ENCODE measurements at regions of chr22 and their contacts with region 1.

Region 1: DNA sequence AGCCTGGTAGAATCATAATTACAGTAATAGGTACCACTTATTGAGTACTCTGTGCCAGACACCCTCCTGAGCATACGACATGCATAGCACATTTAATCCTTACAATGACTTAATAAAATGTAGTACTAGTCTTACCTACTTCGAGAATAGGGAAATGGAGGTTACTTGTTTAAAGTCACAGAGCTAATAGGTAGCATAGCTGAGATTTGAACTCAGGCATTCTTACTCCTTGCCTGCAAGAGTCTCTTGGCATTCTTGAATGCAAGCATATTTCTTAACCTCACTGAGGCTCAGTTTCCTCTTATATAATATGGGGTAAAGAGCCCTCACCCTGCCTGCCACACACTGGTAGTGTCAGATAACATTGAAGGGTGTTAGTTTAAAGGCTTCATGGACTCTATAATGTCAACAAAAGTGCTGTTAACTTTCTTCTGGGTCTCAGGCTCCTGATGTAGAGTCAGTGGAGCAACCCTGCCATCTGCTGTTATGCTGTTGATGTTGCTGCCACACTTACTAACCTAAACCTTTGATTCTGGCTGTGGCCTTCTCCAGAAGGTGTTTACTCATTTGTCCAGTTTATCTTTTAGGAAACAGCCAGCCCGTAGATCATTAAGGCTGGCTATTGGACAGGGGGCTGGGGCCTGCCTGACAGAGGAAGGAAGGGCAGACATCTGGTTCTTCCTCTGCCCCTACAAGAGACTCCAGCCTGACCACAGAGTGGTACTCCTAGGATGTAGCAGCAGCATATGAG is 18.9 kb downstream of the LIMK2 start:
- DNase-seq: peak; percentile 74
- ATAC-seq: peak; percentile 96
- H3K4me3 ChIP-seq: no peak overlapping the region
- H3K27ac ChIP-seq: no peak overlapping the region
- H3K4me1 ChIP-seq: peaks cover 15% of the 10 kb centered on the region
- H3K27me3 ChIP-seq: no peaks in the 10 kb centered on the region
- CTCF ChIP-seq: peak; percentile 91
- POLR2A ChIP-seq: peak; percentile 40; the same call in 1 of the 2 replicates
- RAD21 ChIP-seq: peak; percentile 93

Region 2: DNA sequence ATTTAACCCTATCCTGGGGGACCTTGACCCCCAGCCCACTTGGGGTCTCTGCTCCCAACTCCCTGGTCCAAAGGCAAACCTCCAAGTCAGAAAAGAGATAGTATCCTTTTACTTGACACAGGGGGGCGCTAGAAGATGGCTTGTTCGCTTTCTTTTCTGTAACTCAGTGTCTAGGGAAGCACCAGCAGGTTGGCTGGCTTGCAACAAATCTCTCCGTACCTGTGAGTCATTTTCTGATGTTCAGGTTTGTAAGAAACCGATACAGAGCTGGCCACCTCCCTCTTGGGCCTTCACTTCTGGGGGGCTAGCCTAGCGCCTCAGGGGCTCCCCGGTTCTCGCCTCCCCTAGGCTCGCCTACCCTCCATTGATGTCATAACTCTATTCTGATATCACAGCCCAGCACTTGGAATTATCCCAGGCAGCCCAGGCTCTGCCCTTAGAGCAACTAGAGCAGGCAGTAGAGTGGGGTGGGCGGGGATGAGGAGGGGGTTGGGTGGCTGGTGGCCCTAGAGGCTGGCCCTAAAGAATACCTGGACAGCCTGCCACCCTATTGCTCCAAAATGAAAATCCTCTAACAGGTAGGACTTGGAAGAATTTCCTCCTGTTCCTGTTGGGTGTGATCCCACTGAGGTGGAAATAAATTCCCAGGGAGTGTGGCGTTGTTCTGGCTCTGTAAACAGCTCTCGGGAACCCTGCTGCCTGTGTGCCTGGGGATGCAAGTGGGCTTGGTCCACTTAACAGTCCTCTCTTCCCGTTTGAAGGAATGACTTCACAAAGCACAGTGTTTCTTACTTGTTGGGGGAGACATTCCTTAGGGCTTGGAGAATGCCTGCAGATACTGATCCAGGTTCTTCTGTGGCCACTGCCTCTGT is 467.0 kb before region 1 on chr22:
- CTCF ChIA-PET with region 1: no interaction called
- POLR2A ChIA-PET with region 1: no interaction called
- dilution Hi-C with region 1: no loop called
- in situ Hi-C with region 1: no loop called
- intact Hi-C with region 1: loop called (anchors 5 kb)
- DNase-seq: peak; percentile 86
- ATAC-seq: peak; percentile 84
- H3K4me3 ChIP-seq: no peak overlapping the region
- H3K27ac ChIP-seq: no peak overlapping the region
- H3K4me1 ChIP-seq: no peaks in the 10 kb centered on the region
- H3K27me3 ChIP-seq: no peaks in the 10 kb centered on the region
- CTCF ChIP-seq: peak; percentile 90
- POLR2A ChIP-seq: no peak
- RAD21 ChIP-seq: peak; percentile 96

Region 3: GRCh38 chr22:31089160-31090100 is 141.6 kb before region 1 on chr22:
- CTCF ChIA-PET with region 1: no interaction called
- POLR2A ChIA-PET with region 1: no interaction called
- dilution Hi-C with region 1: no loop called
- in situ Hi-C with region 1: no loop called
- intact Hi-C with region 1: loop called (anchors 1 kb)
- DNase-seq: no peak
- ATAC-seq: peak; percentile 22
- H3K4me3 ChIP-seq: no peak overlapping the region
- H3K27ac ChIP-seq: no peak overlapping the region
- H3K4me1 ChIP-seq: peaks cover 5% of the 10 kb centered on the region
- H3K27me3 ChIP-seq: no peaks in the 10 kb centered on the region
- CTCF ChIP-seq: peak; percentile 79
- POLR2A ChIP-seq: no peak
- RAD21 ChIP-seq: peak; percentile 75

Region 4: GRCh38 chr22:31119026-31119717 is 111.9 kb before region 1 on chr22:
- CTCF ChIA-PET with region 1: no interaction called
- POLR2A ChIA-PET with region 1: no interaction called
- dilution Hi-C with region 1: no loop called
- in situ Hi-C with region 1: loop called (anchors 10 kb)
- intact Hi-C with region 1: no loop called
- DNase-seq: no peak
- ATAC-seq: no peak
- H3K4me3 ChIP-seq: no peak overlapping the region
- H3K27ac ChIP-seq: no peak overlapping the region
- H3K4me1 ChIP-seq: peaks cover 5% of the 10 kb centered on the region
- H3K27me3 ChIP-seq: no peaks in the 10 kb centered on the region
- CTCF ChIP-seq: no peak
- POLR2A ChIP-seq: no peak
- RAD21 ChIP-seq: no peak

Region 5: DNA sequence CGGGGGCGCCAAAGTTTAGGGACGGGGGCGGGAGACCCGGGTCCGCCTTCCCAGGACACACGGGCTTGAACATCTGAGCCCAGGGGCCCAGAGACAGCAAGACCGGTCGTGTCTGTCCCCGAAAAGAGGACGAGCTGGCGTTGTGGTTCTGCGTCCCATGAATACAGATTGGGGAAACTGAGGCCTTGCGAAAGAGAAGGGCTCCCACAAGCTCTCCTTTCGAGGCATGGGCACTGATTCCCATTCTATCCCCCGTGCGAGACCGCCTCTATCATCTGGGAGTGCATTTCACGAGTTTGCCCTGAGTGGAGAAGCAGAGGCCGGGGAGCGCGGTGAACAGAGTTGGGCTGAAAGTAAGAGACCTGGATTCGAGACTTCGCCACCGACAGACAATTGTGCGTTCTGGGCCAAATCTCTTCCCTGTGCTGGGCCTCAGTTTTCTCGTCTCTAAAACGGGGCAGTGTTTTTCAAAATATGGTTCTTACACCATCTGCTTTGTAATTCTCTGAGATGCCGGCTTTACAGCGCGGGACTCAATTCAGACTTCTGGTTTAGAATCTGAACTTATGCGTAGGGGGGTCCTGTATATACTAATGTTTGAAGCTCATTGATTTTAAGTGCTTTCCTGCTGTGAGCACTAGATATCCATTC is 70.6 kb before region 1 on chr22:
- CTCF ChIA-PET with region 1: interaction called, 3 read pairs
- POLR2A ChIA-PET with region 1: no interaction called
- dilution Hi-C with region 1: no loop called
- in situ Hi-C with region 1: no loop called
- intact Hi-C with region 1: loop called (anchors 5 kb)
- DNase-seq: peak; percentile 31
- ATAC-seq: peak; percentile 70
- H3K4me3 ChIP-seq: peak overlapping the region; percentile 90
- H3K27ac ChIP-seq: peak overlapping the region; percentile 89
- H3K4me1 ChIP-seq: peaks cover 17% of the 10 kb centered on the region
- H3K27me3 ChIP-seq: no peaks in the 10 kb centered on the region
- CTCF ChIP-seq: no peak
- POLR2A ChIP-seq: no peak
- RAD21 ChIP-seq: no peak

Region 6: DNA sequence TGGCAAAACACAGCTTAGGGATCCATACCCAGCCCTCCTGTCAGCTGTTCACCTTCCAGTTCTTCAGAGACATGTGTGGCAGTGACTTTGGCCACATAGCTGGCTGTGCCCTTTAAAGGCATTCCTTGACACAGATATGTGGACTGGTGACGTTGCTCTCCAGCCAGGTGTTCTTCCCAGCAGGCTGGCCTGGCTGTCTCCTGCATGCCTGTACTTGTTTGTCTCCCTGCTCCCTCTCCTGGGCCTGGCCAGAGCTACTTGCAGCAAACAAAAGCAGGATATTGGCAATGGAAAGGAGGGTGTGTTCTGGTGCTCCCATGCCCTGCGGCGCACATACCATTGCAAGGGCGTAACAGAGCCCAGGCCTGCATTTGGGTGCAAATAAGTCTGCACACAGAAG is 22.9 kb after region 1 on chr22:
- CTCF ChIA-PET with region 1: no interaction called
- POLR2A ChIA-PET with region 1: no interaction called
- dilution Hi-C with region 1: no loop called
- in situ Hi-C with region 1: no loop called
- intact Hi-C with region 1: no loop called
- DNase-seq: no peak
- ATAC-seq: no peak
- H3K4me3 ChIP-seq: no peak overlapping the region
- H3K27ac ChIP-seq: no peak overlapping the region
- H3K4me1 ChIP-seq: peaks cover 17% of the 10 kb centered on the region
- H3K27me3 ChIP-seq: no peaks in the 10 kb centered on the region
- CTCF ChIP-seq: no peak
- POLR2A ChIP-seq: no peak
- RAD21 ChIP-seq: no peak

Measured in IMR-90 (cell line).